ENCODE measurements at regions of chr1 and their contacts with region 1.

Region 1: DNA sequence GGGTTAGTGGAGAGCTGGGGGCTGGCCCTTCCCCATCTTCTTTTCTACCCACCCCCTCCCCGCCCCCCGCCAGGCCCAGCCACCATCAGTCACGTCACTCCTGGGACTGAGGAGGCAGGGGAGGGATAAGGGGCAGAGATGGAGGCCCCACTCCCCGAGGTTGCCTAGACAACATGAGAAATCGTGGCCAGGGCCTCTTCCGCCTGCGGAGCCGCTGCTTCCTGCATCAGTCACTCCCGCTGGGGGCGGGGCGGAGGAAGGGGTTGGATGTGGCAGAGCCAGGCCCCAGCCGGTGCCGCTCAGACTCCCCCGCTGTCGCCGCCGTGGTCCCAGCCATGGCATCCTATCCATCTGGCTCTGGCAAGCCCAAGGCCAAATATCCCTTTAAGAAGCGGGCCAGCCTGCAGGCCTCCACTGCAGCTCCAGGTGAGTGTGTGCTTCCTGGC is 1.2 kb downstream of the AMPD2 start:
- DNase-seq: peak; percentile 98
- H3K4me3 Mint-ChIP-seq: peak overlapping the region; percentile 93
- H3K27ac Mint-ChIP-seq: peak overlapping the region; percentile 91
- H3K4me1 Mint-ChIP-seq: peaks cover 57% of the 10 kb centered on the region
- H3K27me3 Mint-ChIP-seq: no peaks in the 10 kb centered on the region

Region 2: GRCh38 chr1:109499661-109500536 is 121.0 kb before region 1 on chr1:
- CTCF ChIA-PET with region 1: no interaction called
- intact Hi-C with region 1: loop called (anchors 5 kb)
- DNase-seq: peak; percentile 73
- H3K4me3 Mint-ChIP-seq: no peak overlapping the region
- H3K27ac Mint-ChIP-seq: peak overlapping the region; percentile 81
- H3K4me1 Mint-ChIP-seq: peaks cover 91% of the 10 kb centered on the region
- H3K27me3 Mint-ChIP-seq: no peaks in the 10 kb centered on the region

Region 3: GRCh38 chr1:109598655-109599054 is 22.2 kb before region 1 on chr1:
- CTCF ChIA-PET with region 1: no interaction called
- intact Hi-C with region 1: loop called (anchors 1 kb)
- DNase-seq: no peak
- H3K4me3 Mint-ChIP-seq: no peak overlapping the region
- H3K27ac Mint-ChIP-seq: no peak overlapping the region
- H3K4me1 Mint-ChIP-seq: peaks cover 20% of the 10 kb centered on the region
- H3K27me3 Mint-ChIP-seq: no peaks in the 10 kb centered on the region

Measured in activated naive CD4-positive, alpha-beta T cell treated with anti-CD3 and anti-CD28 coated beads for 36 hours (primary cell).